ENCODE measurements at regions of chrX and their contacts with region 1.

Region 1: DNA sequence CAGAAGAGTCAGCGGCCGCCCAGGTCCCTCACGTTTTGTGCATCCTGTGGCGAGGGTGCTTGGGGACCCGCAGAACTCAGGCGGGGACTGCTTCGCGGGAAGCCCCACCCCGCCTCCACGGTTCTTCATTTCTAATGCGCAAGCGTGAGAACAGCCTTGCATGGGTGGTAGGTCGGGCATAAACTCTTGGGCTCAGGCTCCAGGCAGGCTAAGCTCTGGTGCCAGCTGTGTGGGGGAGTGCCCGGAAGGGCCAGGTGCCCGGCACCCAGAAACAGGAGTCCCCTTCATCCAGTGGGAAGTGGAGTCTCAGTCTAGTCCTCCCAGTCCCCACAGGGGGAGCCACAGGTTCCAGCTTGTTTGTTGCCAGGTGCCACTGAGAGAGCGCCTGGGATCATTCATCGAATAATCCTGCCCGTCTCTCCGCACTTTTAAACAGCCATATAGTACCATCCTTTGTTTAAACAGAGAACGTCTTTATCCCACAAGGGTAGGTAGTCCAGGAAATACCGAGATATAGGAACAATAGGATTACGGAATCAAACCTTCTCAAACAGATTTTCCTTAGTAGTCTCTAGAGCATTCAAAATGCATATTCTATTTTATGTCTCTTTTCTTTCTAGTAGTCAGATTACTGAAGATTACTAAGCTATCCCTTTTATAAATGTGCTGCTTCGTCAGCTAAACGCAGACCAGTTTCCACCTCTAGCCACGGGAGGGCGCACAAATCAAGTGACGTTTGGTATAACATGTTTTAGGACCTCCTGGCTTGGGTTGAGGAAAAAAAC is 12.7 kb upstream of the RBBP7 start:
- DNase-seq: peak; percentile 83
- H3K4me3 Mint-ChIP-seq: peak overlapping the region; percentile 73
- H3K27ac Mint-ChIP-seq: peak overlapping the region; percentile 72
- H3K4me1 Mint-ChIP-seq: no peaks in the 10 kb centered on the region
- H3K27me3 Mint-ChIP-seq: no peaks in the 10 kb centered on the region

Region 2: DNA sequence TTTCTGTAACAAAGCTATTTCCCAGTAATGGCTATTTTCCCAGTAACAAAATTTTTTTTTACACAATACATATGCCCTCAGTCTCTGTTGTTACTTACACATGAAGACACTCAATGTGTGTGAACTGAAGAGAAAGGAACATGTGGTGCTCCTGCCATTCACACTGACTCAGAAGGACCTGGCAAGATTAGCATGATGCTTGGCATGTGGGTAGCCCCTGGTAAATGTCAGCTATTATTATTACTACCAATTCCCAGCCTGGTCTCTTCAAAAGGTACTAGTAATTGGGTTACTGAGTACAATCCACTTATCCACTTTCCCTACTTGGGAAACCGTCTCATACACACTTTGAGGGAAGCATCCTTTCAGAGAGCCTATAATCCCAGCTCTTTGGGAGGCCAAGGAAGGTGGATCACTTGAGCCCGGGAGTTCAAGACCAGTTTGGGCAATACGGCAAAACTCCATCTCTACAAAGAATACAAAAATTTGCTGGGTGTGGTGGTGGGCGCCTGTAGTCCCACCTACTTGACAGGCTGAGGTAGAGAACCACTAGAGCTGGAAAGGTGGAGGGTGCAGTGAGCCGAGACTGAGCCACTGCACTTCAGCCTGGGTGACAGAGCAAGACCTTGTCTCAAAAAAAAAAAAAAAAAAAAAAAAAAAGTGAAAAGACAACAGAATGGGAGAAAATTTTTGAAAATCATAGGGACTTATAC is 27.4 kb before region 1 on chrX:
- CTCF ChIA-PET with region 1: interaction called, 4 read pairs
- intact Hi-C with region 1: loop called (anchors 2 kb)
- DNase-seq: peak; percentile 31
- H3K4me3 Mint-ChIP-seq: peak overlapping the region; percentile 36
- H3K27ac Mint-ChIP-seq: peak overlapping the region; percentile 92
- H3K4me1 Mint-ChIP-seq: peaks cover 63% of the 10 kb centered on the region
- H3K27me3 Mint-ChIP-seq: no peaks in the 10 kb centered on the region

Region 3: GRCh38 chrX:16914058-16914457 is 31.2 kb after region 1 on chrX:
- CTCF ChIA-PET with region 1: no interaction called
- intact Hi-C with region 1: no loop called
- DNase-seq: no peak
- H3K4me3 Mint-ChIP-seq: no peak overlapping the region
- H3K27ac Mint-ChIP-seq: no peak overlapping the region
- H3K4me1 Mint-ChIP-seq: no peaks in the 10 kb centered on the region
- H3K27me3 Mint-ChIP-seq: no peaks in the 10 kb centered on the region

Region 4: DNA sequence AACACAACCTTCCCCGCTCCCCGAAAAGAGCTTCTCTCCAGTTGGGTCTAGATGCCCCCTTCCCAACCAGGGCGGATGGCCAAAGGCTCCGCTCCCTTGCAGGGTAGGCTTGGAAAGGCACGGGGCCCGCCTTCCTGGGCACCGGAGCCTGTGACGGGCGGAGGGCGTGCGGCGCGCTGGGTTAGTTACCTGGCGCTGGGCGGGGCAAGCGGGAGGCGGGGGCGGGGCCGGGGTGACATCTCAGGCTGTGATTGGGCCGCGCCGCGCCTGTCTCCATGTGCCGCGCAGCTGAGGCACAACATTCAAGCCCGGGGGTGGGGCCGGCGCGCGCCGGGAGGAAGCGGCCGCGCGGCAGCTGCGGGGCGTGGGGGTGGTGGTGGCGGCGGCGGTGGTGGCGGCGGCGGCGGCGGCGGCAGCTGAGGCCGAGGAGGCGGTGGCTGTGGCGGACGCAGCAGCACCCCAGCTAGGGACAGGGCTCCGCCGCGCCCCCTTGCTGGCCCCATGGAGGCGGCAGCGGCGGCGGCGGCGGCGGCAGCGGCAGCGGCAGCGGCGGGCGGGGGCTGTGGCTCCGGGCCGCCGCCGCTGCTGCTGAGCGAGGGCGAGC is 63.6 kb after region 1 on chrX and contains the start of gene REPS2:
- CTCF ChIA-PET with region 1: interaction called, 7 read pairs
- intact Hi-C with region 1: loop called (anchors 2 kb)
- DNase-seq: peak; percentile 83
- H3K4me3 Mint-ChIP-seq: peak within 1 kb of the TSS; percentile 71
- H3K27ac Mint-ChIP-seq: no peak within 1 kb of the TSS
- H3K4me1 Mint-ChIP-seq: peaks cover 2% of the 10 kb centered on the region
- H3K27me3 Mint-ChIP-seq: no peaks in the 10 kb centered on the region
- total RNA-seq, gene REPS2: not detected

Region 5: DNA sequence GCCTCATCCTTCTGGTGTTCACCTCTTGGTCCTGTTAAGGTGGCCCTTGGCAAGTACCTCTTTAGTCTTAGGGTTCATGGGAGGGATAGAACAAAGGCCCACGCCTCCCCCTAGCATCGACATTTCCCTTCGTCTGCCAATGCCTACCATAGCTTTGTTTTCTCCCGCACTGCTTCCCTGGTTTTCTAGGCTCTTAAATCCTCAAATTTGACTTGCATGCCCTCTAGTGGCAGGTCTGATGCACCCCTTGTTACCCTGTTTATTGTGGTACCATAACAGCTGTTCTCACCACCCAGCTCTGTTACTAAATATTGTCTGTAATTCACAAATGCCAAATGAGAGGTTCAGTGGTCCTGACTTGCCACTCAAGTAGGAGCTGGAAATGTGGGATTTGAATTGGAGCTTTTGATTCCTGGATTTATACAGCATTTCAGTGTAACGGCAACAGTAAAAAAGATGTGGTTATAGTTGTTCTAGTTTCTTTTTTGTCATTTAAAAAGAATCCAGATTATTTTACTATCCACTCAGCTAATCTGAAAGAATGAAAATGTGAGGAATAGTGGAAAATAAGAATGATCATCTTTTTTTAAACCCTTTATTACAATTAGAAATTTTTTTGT is 163.7 kb after region 1 on chrX:
- CTCF ChIA-PET with region 1: interaction called, 36 read pairs
- intact Hi-C with region 1: loop called (anchors 1 kb)
- DNase-seq: peak; percentile 67
- H3K4me3 Mint-ChIP-seq: no peak overlapping the region
- H3K27ac Mint-ChIP-seq: no peak overlapping the region
- H3K4me1 Mint-ChIP-seq: no peaks in the 10 kb centered on the region
- H3K27me3 Mint-ChIP-seq: no peaks in the 10 kb centered on the region